ENCODE measurements at regions of chr3 and their contacts with region 1.

Region 1: GRCh38 chr3:126113733-126114442 is 30.0 kb upstream of the SLC41A3 start:
- DNase-seq: no peak
- H3K4me3 Mint-ChIP-seq: no peak overlapping the region
- H3K27ac Mint-ChIP-seq: no peak overlapping the region
- H3K4me1 Mint-ChIP-seq: no peaks in the 10 kb centered on the region
- H3K27me3 Mint-ChIP-seq: peaks cover under 1% of the 10 kb centered on the region

Region 2: DNA sequence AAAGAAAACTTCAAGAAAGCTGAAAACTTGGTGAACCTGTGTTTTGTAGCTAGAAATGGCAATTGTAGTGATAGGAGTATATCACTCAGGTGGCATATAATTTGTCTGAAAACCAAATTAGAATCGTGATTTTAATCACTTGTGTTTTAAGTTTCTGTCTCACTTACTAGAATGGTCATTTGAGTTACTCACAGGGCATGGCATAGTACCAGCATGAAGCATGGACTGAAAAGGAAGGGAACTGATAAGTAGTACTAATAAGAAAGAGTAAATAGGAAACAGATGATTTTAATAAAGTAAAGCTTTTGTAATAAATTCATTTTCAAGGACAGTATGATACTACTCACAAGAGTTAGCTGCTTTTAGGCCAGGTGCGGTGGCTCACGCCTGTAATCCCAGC is 540.7 kb before region 1 on chr3:
- intact Hi-C with region 1: no loop called
- DNase-seq: no peak
- H3K4me3 Mint-ChIP-seq: no peak overlapping the region
- H3K27ac Mint-ChIP-seq: no peak overlapping the region
- H3K4me1 Mint-ChIP-seq: no peaks in the 10 kb centered on the region
- H3K27me3 Mint-ChIP-seq: no peaks in the 10 kb centered on the region

Region 3: DNA sequence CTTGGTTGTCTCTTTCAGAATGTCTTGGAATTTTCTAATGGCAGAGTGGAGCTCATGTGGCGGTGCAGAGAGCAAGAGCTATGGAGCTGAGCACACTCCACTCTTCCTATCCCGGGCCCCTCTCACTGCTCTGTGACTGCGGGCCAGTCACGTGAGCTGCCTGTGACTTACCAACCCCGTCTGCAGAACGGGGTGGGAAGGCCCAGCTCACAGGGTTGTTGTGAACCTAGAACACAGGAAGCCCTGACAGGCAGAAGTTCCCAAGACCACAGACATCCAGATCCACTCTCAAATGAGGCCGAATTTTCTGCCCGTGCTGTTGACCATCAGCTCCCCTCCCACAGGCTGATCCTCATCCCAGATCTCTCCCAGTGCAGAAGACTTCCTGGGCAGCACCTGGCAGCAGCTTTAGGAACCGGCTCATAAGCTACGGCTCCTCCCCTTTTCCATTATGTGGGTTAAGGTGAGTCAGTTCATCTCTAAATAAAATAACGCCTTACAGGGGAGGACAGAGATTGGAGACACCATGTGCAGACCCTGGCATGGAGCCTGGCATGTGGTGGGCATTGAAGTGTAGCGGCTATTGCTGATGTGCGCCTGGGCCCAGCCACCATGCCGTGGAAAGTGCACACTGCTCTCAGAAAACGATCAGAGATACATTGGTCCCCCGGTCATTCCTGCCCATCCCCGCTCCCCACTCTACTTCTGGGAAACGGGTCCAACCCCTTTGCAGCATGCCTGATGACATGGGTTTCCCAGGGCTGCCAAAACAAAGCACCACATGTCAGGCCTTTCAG is 833.7 kb after region 1 on chr3:
- intact Hi-C with region 1: loop called (anchors 5 kb)
- DNase-seq: no peak
- H3K4me3 Mint-ChIP-seq: no peak overlapping the region
- H3K27ac Mint-ChIP-seq: peak overlapping the region; percentile 18
- H3K4me1 Mint-ChIP-seq: peaks cover 8% of the 10 kb centered on the region
- H3K27me3 Mint-ChIP-seq: no peaks in the 10 kb centered on the region